Naive thymus-derived CD8-positive, alpha-beta T cell (primary cell): ENCODE measurements at regions of chr17 and their contacts with region 1.

Region 1: GRCh38 chr17:29568331-29569244 is at the start of gene TP53I13:
- DNase-seq: peak; percentile 72 to 93 (median 83)
- ATAC-seq: peak; percentile 65 to 66
- H3K4me3 Mint-ChIP-seq: peak within 1 kb of the TSS; percentile 91 to 99 (median 96)
- H3K27ac Mint-ChIP-seq: peak within 1 kb of the TSS; percentile 76 to 99 (median 95)
- H3K4me1 Mint-ChIP-seq: peaks cover 28 to 41% (median 39%) of the 10 kb centered on the region in 4 donors
- H3K27me3 Mint-ChIP-seq: no peaks in the 10 kb centered on the region
- polyA plus RNA-seq, gene TP53I13: 22.7 to 26.8 (median 25.5) TPM

Region 2: GRCh38 chr17:29579866-29580771 is 11.5 kb after region 1 on chr17:
- POLR2A ChIA-PET with region 1: interaction called, 25 read pairs
- DNase-seq: peak; percentile 81 to 94 (median 89)
- ATAC-seq: peak; percentile 98 to 99
- H3K4me3 Mint-ChIP-seq: peak overlapping the region in 1 of 10 donors; percentile 35
- H3K27ac Mint-ChIP-seq: peak overlapping the region; percentile 38 to 93 (median 76)
- H3K4me1 Mint-ChIP-seq: peaks cover 11 to 28% (median 26%) of the 10 kb centered on the region in 4 donors
- H3K27me3 Mint-ChIP-seq: no peaks in the 10 kb centered on the region

Region 3: DNA sequence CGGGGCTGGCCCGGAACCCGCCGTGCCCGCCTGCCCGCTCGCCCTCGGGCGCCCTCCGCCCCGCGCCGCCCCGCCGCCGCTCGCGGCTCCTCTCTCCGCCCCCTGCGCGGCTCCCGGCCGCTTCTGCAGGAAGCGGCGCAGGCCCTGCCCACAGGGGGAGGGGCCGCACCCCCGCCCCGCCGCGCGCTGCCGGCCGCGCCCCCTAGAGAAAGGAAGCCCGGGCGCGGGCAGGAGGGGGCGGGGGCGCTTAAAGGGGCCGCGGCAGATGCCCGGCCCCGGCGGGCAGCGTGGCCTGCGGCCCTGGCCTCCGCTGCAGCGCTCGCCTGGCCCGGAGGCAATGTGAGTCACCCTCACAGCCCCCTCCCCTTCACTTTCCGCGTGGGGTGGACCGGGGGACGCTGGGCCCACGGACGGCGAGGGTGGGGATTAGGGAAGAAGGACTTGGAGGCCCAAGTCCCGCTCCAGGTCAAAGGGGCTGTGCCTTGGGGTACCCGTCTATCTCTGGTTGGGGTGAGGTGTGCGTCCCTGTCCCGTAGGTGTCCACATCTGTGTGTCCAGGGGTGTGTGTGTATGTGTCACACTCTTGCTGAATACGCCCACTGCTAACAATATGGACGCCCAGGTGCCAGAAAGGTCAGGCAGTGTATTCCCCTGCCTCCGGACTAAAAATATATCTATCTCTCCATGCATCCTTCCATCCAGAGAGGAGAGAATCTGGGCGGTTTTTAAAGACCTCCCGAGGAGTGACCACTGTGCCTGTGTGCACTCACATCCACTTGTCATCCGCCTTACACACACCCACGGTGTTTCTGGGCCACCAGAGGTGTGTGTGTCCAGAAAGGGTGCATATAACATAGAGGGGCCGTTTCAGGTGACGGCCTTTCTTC is 21.2 kb after region 1 on chr17 and contains the start of gene GIT1:
- POLR2A ChIA-PET with region 1: interaction called, 21 read pairs
- DNase-seq: peak; percentile 72 to 89 (median 83)
- ATAC-seq: peak; percentile 74 to 82
- H3K4me3 Mint-ChIP-seq: peak within 1 kb of the TSS; percentile 88 to 95 (median 94)
- H3K27ac Mint-ChIP-seq: peak within 1 kb of the TSS; percentile 78 to 95 (median 92)
- H3K4me1 Mint-ChIP-seq: peaks cover 25 to 77% (median 73%) of the 10 kb centered on the region in 4 donors
- H3K27me3 Mint-ChIP-seq: peaks cover 0 to 2% (median 0%) of the 10 kb centered on the region in 5 donors
- polyA plus RNA-seq, gene GIT1: 4.4 to 27.7 (median 6.7) TPM

Region 4: DNA sequence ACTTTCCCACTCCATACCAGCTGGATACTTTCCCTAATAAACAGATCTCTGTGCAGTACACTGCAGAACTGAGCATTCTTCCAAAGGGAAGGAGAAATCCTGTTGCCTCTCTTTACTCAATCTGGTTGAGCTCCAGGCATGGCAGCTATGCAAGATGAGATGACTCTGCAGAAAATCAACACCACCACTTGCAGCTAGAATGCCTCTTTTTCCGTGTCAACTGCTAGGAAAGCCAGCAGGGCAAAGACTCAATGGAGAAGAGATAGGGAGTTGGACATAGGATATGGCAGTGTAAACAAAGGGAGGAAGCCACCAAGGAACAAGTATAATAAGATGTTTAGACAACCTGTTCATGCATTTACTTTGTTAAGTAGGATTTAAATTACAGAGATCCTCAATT is 94.6 kb after region 1 on chr17:
- POLR2A ChIA-PET with region 1: no interaction called
- DNase-seq: no peak
- ATAC-seq: no peak
- H3K4me3 Mint-ChIP-seq: no peak overlapping the region
- H3K27ac Mint-ChIP-seq: peak overlapping the region in 7 of 10 donors; percentile 6 to 76 (median 50)
- H3K4me1 Mint-ChIP-seq: peaks cover 13 to 43% (median 22%) of the 10 kb centered on the region in 4 donors
- H3K27me3 Mint-ChIP-seq: no peaks in the 10 kb centered on the region